ENCODE measurements at regions of chr6 and their contacts with region 1.

Region 1: DNA sequence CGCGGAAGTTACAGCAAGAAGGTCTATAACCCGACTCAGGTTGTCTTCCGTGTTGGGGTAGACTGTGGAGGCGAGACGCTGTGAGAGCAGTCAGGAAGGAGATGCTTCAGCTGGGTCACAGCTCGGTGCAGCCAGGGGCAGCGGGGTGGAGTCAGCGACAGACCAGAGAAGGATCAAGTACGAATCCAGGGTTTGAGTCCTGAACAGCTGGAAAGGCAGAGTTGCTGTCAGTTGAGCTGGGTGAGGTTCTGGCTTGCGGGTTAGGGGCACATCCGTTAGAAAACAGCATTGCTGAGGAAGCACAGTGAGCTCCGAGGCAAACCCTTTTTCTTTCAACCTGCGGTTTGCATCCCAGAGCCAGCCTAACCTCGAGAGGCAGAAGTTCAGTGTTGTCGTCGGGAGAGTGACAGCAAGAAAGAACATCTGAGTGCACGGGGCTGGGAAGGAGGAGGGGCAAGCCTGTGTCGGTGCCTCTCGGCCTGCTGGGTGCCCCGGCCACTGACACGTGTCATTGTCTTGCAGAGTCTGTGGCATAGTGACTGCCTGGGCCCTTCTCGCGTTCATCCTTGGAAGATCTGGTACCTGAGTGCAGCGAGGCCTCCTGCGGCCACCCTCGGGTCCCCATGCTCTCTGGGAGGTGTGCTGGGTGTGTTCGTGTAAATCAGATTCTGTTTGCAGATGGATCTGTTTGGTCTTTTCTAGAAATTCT is 20.0 kb downstream of the PNLDC1 start:
- DNase-seq: peak; percentile 38 to 87 (median 82)
- H3K4me3 ChIP-seq: peak overlapping the region in 6 of 7 experiments; percentile 8 to 66 (median 18)
- H3K27ac ChIP-seq: peak overlapping the region in 1 of 2 experiments; percentile 45
- H3K4me1 ChIP-seq: peaks cover 8 to 53% (median 45%) of the 10 kb centered on the region in 4 experiments
- H3K27me3 ChIP-seq: no peaks in the 10 kb centered on the region

Region 2: DNA sequence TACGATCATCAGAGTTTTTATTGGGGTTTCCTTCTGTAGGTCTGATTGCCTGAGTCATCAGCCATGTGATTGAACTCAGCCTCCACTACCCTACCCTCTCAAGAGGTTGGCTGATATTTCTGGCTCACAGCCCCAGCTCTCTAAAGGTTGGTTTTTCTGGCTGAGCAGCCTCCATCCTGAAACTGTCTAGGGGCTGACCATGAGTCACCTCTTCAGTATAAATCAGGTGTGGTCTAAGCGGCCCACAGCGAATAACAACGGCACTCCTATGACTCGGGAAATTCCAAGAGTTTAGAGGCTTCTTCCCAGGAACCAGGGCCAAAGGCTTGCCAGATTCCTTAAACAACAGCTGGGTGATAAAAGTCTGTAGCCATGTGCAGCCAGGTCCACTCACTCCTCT is 242.5 kb before region 1 on chr6:
- CTCF ChIA-PET with region 1: no interaction called
- POLR2A ChIA-PET with region 1: no interaction called
- DNase-seq: no peak
- H3K4me3 ChIP-seq: no peak overlapping the region
- H3K27ac ChIP-seq: no peak overlapping the region
- H3K4me1 ChIP-seq: no peaks in the 10 kb centered on the region
- H3K27me3 ChIP-seq: peaks cover 0 to 3% (median 0%) of the 10 kb centered on the region in 5 experiments

Region 3: DNA sequence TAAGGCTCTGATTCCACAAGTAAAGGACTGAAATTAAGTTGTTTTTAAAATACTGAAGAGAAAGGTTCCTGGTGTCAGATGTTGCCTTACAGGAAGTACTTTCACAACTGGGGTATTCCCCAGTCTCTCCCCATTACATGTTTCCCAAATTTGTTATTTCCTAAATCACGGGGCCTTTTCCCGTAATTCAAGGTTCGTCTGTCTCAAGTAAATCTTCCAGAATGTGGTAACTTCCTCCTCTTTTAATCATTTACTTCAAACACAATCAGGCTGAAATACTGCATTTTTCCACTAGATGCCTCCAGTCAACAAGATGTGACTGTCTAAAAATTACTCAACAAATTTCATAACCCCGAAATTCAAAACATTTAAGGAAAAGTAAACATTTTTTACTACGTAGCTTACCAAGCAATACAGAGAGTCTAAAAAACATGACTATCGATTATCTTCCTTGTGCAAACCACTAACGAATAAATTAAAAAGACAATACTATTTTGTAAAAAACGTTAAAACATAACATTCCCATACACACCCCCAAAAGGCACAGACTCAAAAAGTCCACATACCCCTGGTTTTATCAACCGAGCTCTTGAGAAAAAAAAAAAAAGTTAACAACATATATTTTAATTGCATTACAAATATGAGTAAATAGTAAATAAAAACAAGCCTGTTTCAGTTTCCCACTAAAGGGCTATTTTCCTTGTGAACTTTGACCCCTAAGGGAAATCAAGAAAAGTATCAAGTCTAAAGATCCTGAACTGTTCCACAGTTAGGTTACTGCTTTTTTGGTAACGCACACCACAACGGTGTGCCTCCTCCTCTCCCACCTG is 128.7 kb before region 1 on chr6:
- CTCF ChIA-PET with region 1: no interaction called
- POLR2A ChIA-PET with region 1: no interaction called
- DNase-seq: peak; percentile 84 to 89 (median 89)
- H3K4me3 ChIP-seq: peak overlapping the region; percentile 81 to 94 (median 86)
- H3K27ac ChIP-seq: peak overlapping the region; percentile 50 to 90
- H3K4me1 ChIP-seq: peaks cover 20 to 85% (median 49%) of the 10 kb centered on the region in 4 experiments
- H3K27me3 ChIP-seq: no peaks in the 10 kb centered on the region

Region 4: GRCh38 chr6:159789377-159790148 is 30.5 kb before region 1 on chr6 and contains the start of gene TCP1:
- CTCF ChIA-PET with region 1: interaction called, 12 read pairs
- POLR2A ChIA-PET with region 1: interaction called, 11 read pairs
- DNase-seq: peak; percentile 99 to 100 (median 100)
- H3K4me3 ChIP-seq: peak within 1 kb of the TSS; percentile 66 to 97 (median 94)
- H3K27ac ChIP-seq: peak within 1 kb of the TSS; percentile 79 to 91
- H3K4me1 ChIP-seq: peaks cover 18 to 44% (median 29%) of the 10 kb centered on the region in 4 experiments
- H3K27me3 ChIP-seq: no peaks in the 10 kb centered on the region

Region 5: GRCh38 chr6:160030103-160030502 is 210.0 kb after region 1 on chr6:
- CTCF ChIA-PET with region 1: no interaction called
- POLR2A ChIA-PET with region 1: no interaction called
- DNase-seq: peak in 1 of 3 donors; percentile 3
- H3K4me3 ChIP-seq: no peak overlapping the region
- H3K27ac ChIP-seq: no peak overlapping the region
- H3K4me1 ChIP-seq: no peaks in the 10 kb centered on the region
- H3K27me3 ChIP-seq: peaks cover 0 to 15% (median under 1%) of the 10 kb centered on the region in 5 experiments

Measured in common myeloid progenitor, CD34-positive (primary cell).